AG04450 (cell line): ENCODE measurements at regions of chr17 and their contacts with region 1.

Region 1: DNA sequence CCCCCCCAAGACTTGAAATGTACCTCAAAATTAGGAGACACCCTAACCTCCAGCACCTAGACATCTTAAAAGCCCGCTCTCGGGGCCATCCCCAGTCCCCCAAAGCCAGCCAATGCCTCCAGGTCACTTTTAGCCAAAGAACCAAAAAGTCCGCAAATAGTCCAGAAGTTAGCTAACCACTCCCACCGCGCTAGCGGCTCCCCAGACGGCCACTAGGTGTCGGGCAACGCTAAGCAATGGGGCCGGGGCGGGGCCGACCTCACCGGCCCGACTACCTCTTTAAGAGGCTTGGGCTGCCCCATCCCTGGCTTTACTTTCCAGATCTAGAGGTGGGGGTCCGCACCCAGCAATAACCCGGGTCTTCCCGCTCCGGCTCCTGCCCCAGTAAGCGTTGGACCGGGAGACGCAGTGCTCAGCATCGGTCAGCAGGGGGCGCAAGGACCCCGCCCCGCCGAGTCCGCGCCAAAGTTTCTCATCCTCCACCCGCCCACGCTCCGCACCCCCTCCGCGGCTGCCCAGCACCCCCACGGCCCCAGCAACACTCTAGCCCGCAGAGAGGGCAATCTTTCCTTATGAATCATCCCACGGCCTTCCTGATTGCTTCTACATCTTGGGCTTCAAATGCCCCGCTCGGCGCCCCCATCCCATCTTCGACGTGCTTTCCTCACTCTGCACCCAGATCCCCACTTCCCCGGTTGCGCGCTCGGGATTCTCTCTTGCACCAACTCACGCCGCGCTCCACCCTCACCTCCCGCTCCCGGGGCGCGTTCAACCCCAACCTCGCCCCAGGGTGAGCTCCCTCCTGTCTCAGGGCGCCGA is 765 bp downstream of the COL1A1 start:
- DNase-seq: no peak
- H3K4me3 ChIP-seq: peak overlapping the region; percentile 96
- H3K27ac ChIP-seq: peak overlapping the region; percentile 99
- H3K27me3 ChIP-seq: no peaks in the 10 kb centered on the region
- CTCF ChIP-seq: peak; percentile 85

Region 2: DNA sequence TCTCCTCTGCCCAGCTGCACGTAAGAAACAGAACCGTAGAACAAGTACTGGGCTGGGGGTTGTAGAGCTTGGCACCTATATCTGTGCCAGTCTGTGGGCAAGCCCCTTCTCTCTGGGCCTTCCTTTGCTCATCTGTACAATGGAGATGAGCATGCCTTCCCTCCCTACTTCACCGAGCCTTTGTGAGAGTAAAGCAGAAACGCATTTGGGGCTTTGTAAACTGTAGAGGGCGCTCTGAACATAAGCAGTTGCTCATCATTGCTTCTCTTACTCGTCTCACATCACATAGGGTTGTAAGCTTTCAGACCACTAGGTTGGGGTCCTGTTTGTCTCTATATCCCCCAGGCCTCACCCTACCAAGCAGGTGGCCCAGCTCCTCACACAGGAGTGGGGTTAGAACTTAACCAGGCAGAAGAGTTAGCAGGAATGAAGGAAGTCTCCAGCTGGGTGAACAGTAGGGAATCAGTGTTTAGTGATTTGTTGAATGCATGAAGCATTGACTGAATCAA is 85.8 kb before region 1 on chr17:
- CTCF ChIA-PET with region 1: no interaction called
- POLR2A ChIA-PET with region 1: no interaction called
- DNase-seq: no peak
- H3K4me3 ChIP-seq: no peak overlapping the region
- H3K27ac ChIP-seq: no peak overlapping the region
- H3K27me3 ChIP-seq: peaks cover 3% of the 10 kb centered on the region
- CTCF ChIP-seq: peak; percentile 76

Region 3: DNA sequence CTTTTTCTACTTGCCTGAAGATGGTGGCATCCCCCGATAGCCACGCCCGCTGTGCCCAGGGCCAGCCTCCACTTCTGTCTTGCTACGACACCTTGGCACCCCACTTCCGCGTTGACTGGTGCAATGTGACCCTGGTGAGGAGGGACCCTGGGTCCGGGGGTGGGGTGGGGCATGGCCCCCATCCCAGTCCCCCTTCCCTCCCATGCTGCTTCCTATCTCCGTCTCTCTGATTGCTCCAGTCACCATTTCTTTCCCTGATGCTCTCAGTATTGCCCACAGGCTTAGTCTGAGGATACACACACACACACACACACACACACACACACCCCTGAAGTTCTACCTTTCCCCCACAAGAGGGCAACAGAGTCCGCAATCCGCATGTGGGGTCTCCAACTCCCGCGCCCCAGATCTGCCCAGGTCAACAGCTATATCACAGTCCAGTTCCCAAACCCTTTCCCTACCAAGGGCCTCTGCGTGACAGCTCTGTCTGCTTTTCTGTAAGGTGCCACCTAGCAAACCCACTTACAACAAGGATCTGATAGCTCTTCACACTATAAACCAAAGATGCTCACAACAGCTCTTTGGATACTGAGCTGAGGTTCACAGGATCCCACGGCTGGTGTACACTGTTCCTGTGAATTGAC is 31.4 kb before region 1 on chr17:
- CTCF ChIA-PET with region 1: interaction called, 6 read pairs
- POLR2A ChIA-PET with region 1: interaction called, 97 read pairs
- DNase-seq: no peak
- H3K4me3 ChIP-seq: no peak overlapping the region
- H3K27ac ChIP-seq: no peak overlapping the region
- H3K27me3 ChIP-seq: no peaks in the 10 kb centered on the region
- CTCF ChIP-seq: peak; percentile 98

Region 4: GRCh38 chr17:50184611-50185398 is 15.9 kb before region 1 on chr17:
- CTCF ChIA-PET with region 1: interaction called, 5 read pairs
- POLR2A ChIA-PET with region 1: interaction called, 97 read pairs
- DNase-seq: no peak
- H3K4me3 ChIP-seq: no peak overlapping the region
- H3K27ac ChIP-seq: peak overlapping the region; percentile 98
- H3K27me3 ChIP-seq: no peaks in the 10 kb centered on the region
- CTCF ChIP-seq: no peak

Region 5: GRCh38 chr17:50238601-50239280 is 38.1 kb after region 1 on chr17:
- CTCF ChIA-PET with region 1: no interaction called
- POLR2A ChIA-PET with region 1: interaction called, 37 read pairs
- DNase-seq: no peak
- H3K4me3 ChIP-seq: no peak overlapping the region
- H3K27ac ChIP-seq: no peak overlapping the region
- H3K27me3 ChIP-seq: no peaks in the 10 kb centered on the region
- CTCF ChIP-seq: no peak

Region 6: DNA sequence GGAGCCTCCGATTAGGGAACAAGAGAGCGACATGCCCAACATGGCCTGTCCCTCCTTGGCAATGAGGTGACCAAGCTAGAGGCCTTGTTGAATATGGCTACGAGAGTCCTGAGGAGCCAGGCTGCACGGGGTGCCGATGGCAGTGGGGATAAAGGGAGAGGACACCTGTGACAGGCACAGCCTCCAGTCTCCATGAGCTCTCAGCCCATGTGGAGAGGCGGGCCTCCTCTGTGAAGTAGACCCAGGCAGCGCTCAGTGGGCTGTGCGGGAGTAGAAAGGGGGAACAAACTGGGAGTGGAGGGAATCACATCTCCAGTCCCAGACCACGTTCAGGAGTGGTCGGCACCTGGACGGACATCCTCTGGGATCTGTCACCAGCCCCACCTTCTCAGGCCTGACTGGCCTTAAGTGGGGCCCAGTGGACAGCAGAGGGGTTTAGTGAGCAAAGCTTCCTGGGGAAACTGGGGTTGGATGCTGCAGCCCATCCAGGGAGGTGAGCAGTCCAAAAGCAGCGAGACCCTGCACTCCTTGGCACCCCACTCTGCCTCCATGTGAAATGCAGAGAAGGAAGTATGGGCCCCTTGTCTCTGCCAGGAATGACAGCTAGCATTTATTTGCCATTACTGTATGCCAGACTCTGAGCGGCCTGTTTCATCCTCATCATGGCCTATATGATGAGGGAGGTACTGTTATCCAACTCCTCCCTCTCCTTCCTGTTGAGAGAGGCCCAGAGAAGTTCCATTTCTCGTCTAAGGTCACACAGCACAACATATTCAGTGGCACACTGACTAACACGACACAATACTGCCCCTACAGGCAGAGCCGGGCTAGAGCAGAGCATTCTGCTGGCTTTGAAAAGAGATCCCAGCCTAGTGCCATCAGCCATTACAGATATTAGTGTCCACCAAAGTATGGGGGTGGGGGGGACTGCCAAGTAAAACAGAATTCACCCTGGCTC is 69.1 kb after region 1 on chr17:
- CTCF ChIA-PET with region 1: interaction called, 16 read pairs
- POLR2A ChIA-PET with region 1: interaction called, 654 read pairs
- DNase-seq: peak; percentile 48
- H3K4me3 ChIP-seq: peak overlapping the region; percentile 57
- H3K27ac ChIP-seq: peak overlapping the region; percentile 91
- H3K27me3 ChIP-seq: no peaks in the 10 kb centered on the region
- CTCF ChIP-seq: peak; percentile 87

Region 7: DNA sequence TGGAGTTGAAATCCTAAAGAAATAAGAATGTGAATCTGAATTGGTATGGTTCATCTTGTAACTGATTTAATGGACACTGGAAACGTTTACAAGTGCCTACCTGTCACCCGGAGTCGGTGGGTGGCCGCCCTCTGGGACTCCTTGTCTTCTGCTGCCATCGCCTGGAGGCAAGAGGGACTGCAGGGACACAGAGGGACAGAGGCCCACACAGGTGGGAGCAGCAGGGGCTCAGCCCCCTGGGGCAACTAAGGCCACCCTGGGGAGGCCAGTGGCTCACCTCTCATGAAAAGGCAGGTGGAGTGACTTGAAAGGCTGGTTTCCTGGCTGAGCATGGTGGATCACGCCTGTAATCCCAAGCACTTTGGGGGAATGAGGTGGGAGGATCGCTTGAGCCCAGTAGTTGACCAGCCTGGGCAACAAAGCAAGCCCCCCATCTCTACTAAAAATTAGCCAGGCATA is 96.8 kb after region 1 on chr17:
- CTCF ChIA-PET with region 1: interaction called, 14 read pairs
- POLR2A ChIA-PET with region 1: interaction called, 63 read pairs
- DNase-seq: no peak
- H3K4me3 ChIP-seq: no peak overlapping the region
- H3K27ac ChIP-seq: no peak overlapping the region
- H3K27me3 ChIP-seq: no peaks in the 10 kb centered on the region
- CTCF ChIP-seq: peak; percentile 82